Ovary (tissue), 10 donors: ENCODE measurements at regions of chr15 and their contacts with region 1.

Region 1: GRCh38 chr15:31557899-31558298 is 231.3 kb downstream of the KLF13 start:
- DNase-seq: no peak
- H3K4me3 ChIP-seq: no peak overlapping the region
- H3K27ac ChIP-seq: no peak overlapping the region
- H3K4me1 ChIP-seq: no peaks in the 10 kb centered on the region
- H3K27me3 ChIP-seq: no peaks in the 10 kb centered on the region
- CTCF ChIP-seq: no peak
- EP300 ChIP-seq: no peak
- POLR2A ChIP-seq: no peak

Region 2: DNA sequence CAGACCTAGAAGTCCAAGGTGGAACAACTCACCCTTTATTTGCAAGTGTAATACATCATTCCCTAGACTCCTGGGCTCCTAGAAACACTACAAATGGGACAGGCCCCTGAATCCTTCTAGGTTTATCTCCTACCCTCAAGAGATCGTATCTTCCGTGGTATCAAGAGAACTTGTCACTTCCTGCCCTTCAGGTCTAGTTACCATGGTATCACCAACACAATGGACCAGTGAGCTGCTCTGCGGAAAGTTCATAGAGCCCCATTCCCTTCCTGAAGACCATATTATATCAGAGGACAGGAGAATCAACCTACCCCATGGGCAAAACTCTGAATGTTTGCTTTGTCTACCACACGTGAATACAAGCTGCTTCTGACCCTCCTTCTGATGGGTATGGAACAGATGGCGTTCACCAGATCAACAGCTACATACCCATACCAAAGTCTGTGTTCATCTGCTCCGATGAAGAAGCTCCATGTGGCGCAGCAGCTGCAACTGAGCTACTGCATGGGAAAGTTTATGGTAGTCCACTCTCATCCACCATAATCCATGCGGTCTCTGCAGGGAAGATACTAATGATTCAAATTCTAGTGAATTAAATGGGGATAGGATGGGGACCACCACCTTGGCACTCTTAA is 315.9 kb before region 1 on chr15:
- intact Hi-C with region 1: no loop called
- DNase-seq: peak in 1 of 5 donors; percentile 1
- H3K4me3 ChIP-seq: no peak overlapping the region
- H3K27ac ChIP-seq: no peak overlapping the region
- H3K4me1 ChIP-seq: peaks cover under 1% of the 10 kb centered on the region
- H3K27me3 ChIP-seq: no peaks in the 10 kb centered on the region
- CTCF ChIP-seq: no peak
- EP300 ChIP-seq: no peak
- POLR2A ChIP-seq: no peak

Region 3: DNA sequence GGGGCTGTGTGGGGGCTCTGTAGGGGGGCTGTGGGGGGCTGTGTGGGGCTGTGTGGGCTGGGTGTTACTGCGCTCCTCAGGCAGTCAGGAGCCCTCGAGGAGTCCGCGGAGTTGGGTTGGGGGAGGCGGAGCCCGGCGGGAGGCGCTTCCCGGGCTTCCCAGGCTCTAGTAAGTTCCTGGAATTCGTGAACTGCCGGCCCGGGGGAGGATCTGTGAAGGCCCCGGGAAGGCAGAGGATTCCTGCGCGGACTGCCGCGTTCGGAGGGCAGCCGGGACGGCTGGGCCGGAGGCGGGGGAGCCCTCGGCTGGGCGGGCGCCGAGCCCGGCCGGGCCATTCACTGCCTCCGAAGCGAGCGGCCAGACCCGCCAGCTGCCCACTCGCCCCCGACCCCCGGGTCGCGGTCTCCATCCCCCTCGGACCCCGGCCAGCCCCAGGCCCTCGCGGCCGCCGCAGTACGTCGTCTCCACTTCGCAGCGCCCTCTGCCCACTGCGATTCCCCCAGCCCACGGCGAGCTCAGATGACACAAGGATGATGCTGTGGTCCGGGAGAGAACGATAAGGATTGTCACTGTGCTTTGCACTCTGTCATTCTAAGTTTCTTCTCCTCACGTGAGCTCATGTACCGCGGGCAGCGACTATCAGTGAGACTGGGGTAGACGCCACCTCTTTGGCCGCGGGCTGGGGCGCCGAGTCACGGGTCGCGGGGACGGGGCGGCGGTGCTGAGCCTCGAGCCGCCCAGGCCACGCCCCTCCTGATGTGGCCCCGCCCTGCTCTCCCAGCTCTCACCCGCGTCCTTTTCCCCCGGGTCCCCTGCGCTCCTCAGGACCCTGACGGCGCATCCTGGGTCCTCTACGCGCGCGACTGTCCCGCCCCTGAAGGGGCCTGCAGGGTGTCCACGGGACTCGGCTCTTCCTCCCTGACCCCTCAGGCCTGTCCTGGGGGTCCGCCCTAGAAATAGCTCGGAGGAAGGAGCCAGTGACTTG is 165.9 kb before region 1 on chr15:
- intact Hi-C with region 1: no loop called
- DNase-seq: peak; percentile 64 to 91 (median 80)
- H3K4me3 ChIP-seq: peak overlapping the region; percentile 55
- H3K27ac ChIP-seq: peak overlapping the region; percentile 62 to 78
- H3K4me1 ChIP-seq: peaks cover 4% of the 10 kb centered on the region
- H3K27me3 ChIP-seq: no peaks in the 10 kb centered on the region
- CTCF ChIP-seq: no peak
- EP300 ChIP-seq: peak; percentile 26
- POLR2A ChIP-seq: peak; percentile 86

Region 4: GRCh38 chr15:31579282-31579681 is 21.4 kb after region 1 on chr15:
- intact Hi-C with region 1: loop called in 1 of 4 experiments (anchors 2 kb)
- DNase-seq: no peak
- H3K4me3 ChIP-seq: no peak overlapping the region
- H3K27ac ChIP-seq: no peak overlapping the region
- H3K4me1 ChIP-seq: peaks cover 7% of the 10 kb centered on the region
- H3K27me3 ChIP-seq: no peaks in the 10 kb centered on the region
- CTCF ChIP-seq: no peak
- EP300 ChIP-seq: no peak
- POLR2A ChIP-seq: no peak